ENCODE measurements at regions of chr13 and their contacts with region 1.

Region 1: DNA sequence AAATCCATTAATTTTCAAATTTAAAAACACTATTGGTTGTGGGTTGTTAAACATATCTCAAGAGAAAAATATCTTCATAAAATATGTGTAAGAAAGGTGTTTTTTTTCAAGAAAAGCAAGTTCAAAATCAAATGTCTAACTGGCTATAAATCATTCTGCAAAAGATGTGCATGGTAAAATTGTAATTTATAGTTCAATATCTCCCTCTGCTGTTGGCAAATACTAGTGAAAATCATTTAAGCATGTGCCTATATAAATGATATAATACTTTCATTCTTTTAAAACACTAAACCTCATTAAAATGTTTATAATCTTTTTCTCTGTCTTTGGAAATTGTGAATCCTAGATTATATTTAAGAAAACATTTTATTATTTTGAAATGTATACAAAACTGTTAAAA is 17.2 kb upstream of the SLITRK6 start:
- H3K4me3 ChIP-seq: no peak overlapping the region
- H3K27ac ChIP-seq: no peak overlapping the region
- H3K4me1 ChIP-seq: no peaks in the 10 kb centered on the region
- CTCF ChIP-seq: no peak

Region 2: DNA sequence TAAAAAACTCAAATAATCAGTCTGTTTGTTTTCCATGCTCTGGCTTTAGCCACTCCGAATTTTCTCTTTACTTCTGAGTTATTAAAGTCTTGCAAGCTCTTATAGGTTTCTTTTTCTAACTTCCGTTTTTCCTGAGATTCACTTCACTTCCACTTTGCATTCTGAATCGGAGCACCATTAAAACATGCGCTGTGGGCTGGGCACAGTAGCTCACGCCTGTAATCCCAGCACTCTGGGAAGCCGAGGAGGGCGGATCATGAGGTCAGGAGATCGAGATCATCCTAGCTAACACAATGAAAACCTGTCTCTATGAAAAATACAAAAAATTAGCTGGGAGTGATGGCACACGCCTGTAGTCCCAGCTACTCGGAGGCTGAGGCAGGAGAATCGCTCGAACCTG is 375.0 kb before region 1 on chr13:
- CTCF ChIA-PET with region 1: no interaction called
- POLR2A ChIA-PET with region 1: no interaction called
- H3K4me3 ChIP-seq: no peak overlapping the region
- H3K27ac ChIP-seq: no peak overlapping the region
- H3K4me1 ChIP-seq: no peaks in the 10 kb centered on the region
- CTCF ChIP-seq: no peak

Region 3: GRCh38 chr13:85586422-85586831 is 230.0 kb before region 1 on chr13:
- CTCF ChIA-PET with region 1: no interaction called
- POLR2A ChIA-PET with region 1: no interaction called
- H3K4me3 ChIP-seq: no peak overlapping the region
- H3K27ac ChIP-seq: no peak overlapping the region
- H3K4me1 ChIP-seq: no peaks in the 10 kb centered on the region
- CTCF ChIP-seq: no peak

Region 4: GRCh38 chr13:85601526-85601925 is 214.9 kb before region 1 on chr13:
- CTCF ChIA-PET with region 1: no interaction called
- POLR2A ChIA-PET with region 1: no interaction called
- H3K4me3 ChIP-seq: no peak overlapping the region
- H3K27ac ChIP-seq: no peak overlapping the region
- H3K4me1 ChIP-seq: no peaks in the 10 kb centered on the region
- CTCF ChIP-seq: no peak

Region 5: GRCh38 chr13:85828149-85828548 is 11.7 kb after region 1 on chr13:
- CTCF ChIA-PET with region 1: interaction called, 12 read pairs
- POLR2A ChIA-PET with region 1: no interaction called
- H3K4me3 ChIP-seq: no peak overlapping the region
- H3K27ac ChIP-seq: no peak overlapping the region
- H3K4me1 ChIP-seq: no peaks in the 10 kb centered on the region
- CTCF ChIP-seq: no peak

Measured in HEK293 (cell line).